HepG2 (cell line): ENCODE measurements at regions of chr19 and their contacts with region 1.

Region 1: GRCh38 chr19:42244347-42245220 is 2.2 kb upstream of the GSK3A start:
- DNase-seq: peak; percentile 93
- ATAC-seq: peak; percentile 49
- H3K4me3 ChIP-seq: peak overlapping the region; percentile 79 to 86 (median 81)
- H3K27ac ChIP-seq: peak overlapping the region; percentile 92
- H3K4me1 ChIP-seq: peaks cover 57% of the 10 kb centered on the region
- H3K27me3 ChIP-seq: no peaks in the 10 kb centered on the region; a peak in 1 of 5 replicates
- CTCF ChIP-seq: peak; percentile 87
- EP300 ChIP-seq: 0 out of 4 replicates have a peak, but pooled peaks of 1 of the 2 experiments have one; percentile 37
- POLR2A ChIP-seq: peak in 1 of 2 experiments; percentile 33; a peak in 3 of 4 replicates
- RAD21 ChIP-seq: peak; percentile 53

Region 2: GRCh38 chr19:42121656-42122069 is 122.9 kb before region 1 on chr19:
- CTCF ChIA-PET with region 1: no interaction called
- POLR2A ChIA-PET with region 1: no interaction called
- in situ Hi-C with region 1: no loop called
- intact Hi-C with region 1: no loop called
- DNase-seq: no peak
- ATAC-seq: no peak
- H3K4me3 ChIP-seq: no peak overlapping the region
- H3K27ac ChIP-seq: no peak overlapping the region
- H3K4me1 ChIP-seq: peaks cover 9% of the 10 kb centered on the region
- H3K27me3 ChIP-seq: peaks cover 1 to 19% of the 10 kb centered on the region in 2 experiments; a peak in 4 of 5 replicates
- CTCF ChIP-seq: no peak
- EP300 ChIP-seq: no peak
- POLR2A ChIP-seq: no peak
- RAD21 ChIP-seq: no peak

Region 3: GRCh38 chr19:42199440-42200115 is 45.0 kb before region 1 on chr19:
- CTCF ChIA-PET with region 1: no interaction called
- POLR2A ChIA-PET with region 1: no interaction called
- in situ Hi-C with region 1: no loop called
- intact Hi-C with region 1: no loop called
- DNase-seq: no peak
- ATAC-seq: no peak
- H3K4me3 ChIP-seq: no peak overlapping the region
- H3K27ac ChIP-seq: no peak overlapping the region
- H3K4me1 ChIP-seq: no peaks in the 10 kb centered on the region
- H3K27me3 ChIP-seq: no peaks in the 10 kb centered on the region; a peak in 1 of 5 replicates
- CTCF ChIP-seq: no peak
- EP300 ChIP-seq: no peak
- POLR2A ChIP-seq: no peak
- RAD21 ChIP-seq: no peak

Region 4: GRCh38 chr19:42219812-42220750 is 24.5 kb before region 1 on chr19 and contains the start of gene ZNF526:
- CTCF ChIA-PET with region 1: no interaction called
- POLR2A ChIA-PET with region 1: interaction called, 19 read pairs
- in situ Hi-C with region 1: no loop called
- intact Hi-C with region 1: loop called (anchors 1 kb)
- DNase-seq: peak; percentile 98
- ATAC-seq: peak; percentile 89
- H3K4me3 ChIP-seq: peak within 1 kb of the TSS; percentile 80 to 94 (median 88)
- H3K27ac ChIP-seq: peak within 1 kb of the TSS; percentile 80
- H3K4me1 ChIP-seq: peaks cover 55% of the 10 kb centered on the region
- H3K27me3 ChIP-seq: no peaks in the 10 kb centered on the region; a peak in 1 of 5 replicates
- CTCF ChIP-seq: peak; percentile 62
- EP300 ChIP-seq: no peak; a peak in 1 of 4 replicates
- POLR2A ChIP-seq: peak; percentile 79 to 95
- RAD21 ChIP-seq: peak; percentile 46
- total RNA-seq, gene ZNF526: 8.4 and 8.5 TPM in 2 replicates

Region 5: GRCh38 chr19:42254989-42255765 is 10.6 kb after region 1 on chr19 and contains the start of gene ERF:
- CTCF ChIA-PET with region 1: no interaction called
- POLR2A ChIA-PET with region 1: interaction called, 13 read pairs
- in situ Hi-C with region 1: no loop called
- intact Hi-C with region 1: no loop called
- DNase-seq: peak; percentile 74
- ATAC-seq: peak; percentile 61
- H3K4me3 ChIP-seq: peak within 1 kb of the TSS; percentile 95 to 99 (median 99)
- H3K27ac ChIP-seq: peak within 1 kb of the TSS; percentile 100
- H3K4me1 ChIP-seq: peaks cover 64% of the 10 kb centered on the region
- H3K27me3 ChIP-seq: no peaks in the 10 kb centered on the region; a peak in 1 of 5 replicates
- CTCF ChIP-seq: no peak
- EP300 ChIP-seq: no peak
- POLR2A ChIP-seq: peak; percentile 70 to 92
- RAD21 ChIP-seq: peak; percentile 35; the same call in 1 of the 2 replicates
- total RNA-seq, gene ERF: 43.2 and 67.1 TPM in 2 replicates

Region 6: DNA sequence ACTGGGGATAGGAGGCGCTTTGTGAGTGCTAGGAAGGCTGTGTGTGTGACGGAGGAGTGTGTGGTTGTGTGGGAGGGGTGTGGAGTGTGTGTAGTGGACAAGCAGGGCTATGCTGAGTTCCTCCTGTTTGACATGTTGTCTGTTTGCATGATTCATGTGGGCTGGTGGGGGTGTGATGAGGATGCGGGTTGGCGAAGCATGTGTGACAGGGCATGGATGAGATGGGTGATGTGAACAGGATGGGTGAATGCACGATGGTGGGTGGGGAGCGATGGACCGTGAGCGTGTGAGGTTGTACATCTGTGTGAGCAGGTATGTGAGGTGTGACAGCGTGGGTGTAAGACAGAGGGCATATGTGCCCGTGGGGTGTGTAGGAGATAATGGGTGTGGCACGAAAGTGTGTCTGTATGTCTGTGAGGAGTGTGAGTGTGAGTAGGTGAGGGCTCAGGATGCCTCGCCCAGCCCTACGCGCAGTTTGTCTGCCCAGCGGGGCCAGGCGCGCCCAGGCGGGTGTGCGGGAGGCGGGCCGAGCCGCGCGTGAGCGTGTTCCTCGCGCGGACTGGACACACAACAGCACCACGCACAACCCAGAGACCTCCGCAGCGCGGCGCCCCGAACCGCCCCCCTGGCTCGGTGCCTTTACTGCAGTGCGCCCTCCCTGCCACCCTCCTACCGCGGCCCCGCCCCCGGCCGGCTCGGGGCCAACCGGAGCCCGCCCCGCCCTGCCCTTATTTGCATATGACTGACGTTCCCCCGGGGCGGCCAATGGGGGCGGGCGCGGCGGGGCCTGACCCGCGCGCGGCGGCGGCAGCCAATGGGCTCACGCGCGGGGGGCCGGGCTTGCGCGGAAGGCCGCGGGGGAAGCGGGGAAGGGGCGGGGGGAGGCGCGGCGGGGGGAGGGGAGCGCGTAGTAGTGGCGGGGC is 38.8 kb after region 1 on chr19:
- CTCF ChIA-PET with region 1: interaction called, 6 read pairs
- POLR2A ChIA-PET with region 1: interaction called, 117 read pairs
- in situ Hi-C with region 1: no loop called
- intact Hi-C with region 1: loop called (anchors 2 kb)
- DNase-seq: peak; percentile 83
- ATAC-seq: peak; percentile 52
- H3K4me3 ChIP-seq: peak overlapping the region; percentile 58 to 82 (median 76); a peak in 5 of 6 replicates
- H3K27ac ChIP-seq: peak overlapping the region; percentile 70
- H3K4me1 ChIP-seq: peaks cover 55% of the 10 kb centered on the region
- H3K27me3 ChIP-seq: no peaks in the 10 kb centered on the region; a peak in 1 of 5 replicates
- CTCF ChIP-seq: peak; percentile 39
- EP300 ChIP-seq: no peak
- POLR2A ChIP-seq: peak in 1 of 2 experiments; percentile 88; a peak in 2 of 4 replicates
- RAD21 ChIP-seq: peak; percentile 14; the same call in 1 of the 2 replicates

Region 7: GRCh38 chr19:42301656-42302203 is 57.1 kb after region 1 on chr19 and contains the start of gene PRR19:
- CTCF ChIA-PET with region 1: interaction called, 3 read pairs
- POLR2A ChIA-PET with region 1: interaction called, 15 read pairs
- in situ Hi-C with region 1: no loop called
- intact Hi-C with region 1: no loop called
- DNase-seq: no peak
- ATAC-seq: peak; percentile 40
- H3K4me3 ChIP-seq: peak within 1 kb of the TSS; percentile 58 to 81 (median 77)
- H3K27ac ChIP-seq: peak within 1 kb of the TSS; percentile 43
- H3K4me1 ChIP-seq: peaks cover 28% of the 10 kb centered on the region
- H3K27me3 ChIP-seq: no peaks in the 10 kb centered on the region
- CTCF ChIP-seq: no peak
- EP300 ChIP-seq: no peak
- POLR2A ChIP-seq: no peak
- RAD21 ChIP-seq: no peak
- total RNA-seq, gene PRR19: 0.33 and 0.38 TPM in 2 replicates